ENCODE measurements at regions of chr10 and their contacts with region 1.

Region 1: GRCh38 chr10:73537288-73537687 is 41.5 kb upstream of the PPP3CB start:
- ATAC-seq: peak in 1 of 8 experiments; percentile 44
- H3K4me3 ChIP-seq: no peak overlapping the region
- H3K27ac ChIP-seq: no peak overlapping the region
- H3K4me1 ChIP-seq: no peaks in the 10 kb centered on the region

Region 2: GRCh38 chr10:73644015-73644743 is 106.9 kb after region 1 on chr10:
- in situ Hi-C with region 1: loop called in 7 of 9 experiments (anchors 5 to 25 kb)
- ATAC-seq: peak; percentile 41 to 75 (median 49)
- H3K4me3 ChIP-seq: no peak overlapping the region
- H3K27ac ChIP-seq: no peak overlapping the region
- H3K4me1 ChIP-seq: peaks cover 10 to 17% of the 10 kb centered on the region in 2 donors

Measured in motor neuron (in vitro differentiated cells).